CD8-positive, alpha-beta T cell (primary cell): ENCODE measurements at regions of chr2 and their contacts with region 1.

Region 1: DNA sequence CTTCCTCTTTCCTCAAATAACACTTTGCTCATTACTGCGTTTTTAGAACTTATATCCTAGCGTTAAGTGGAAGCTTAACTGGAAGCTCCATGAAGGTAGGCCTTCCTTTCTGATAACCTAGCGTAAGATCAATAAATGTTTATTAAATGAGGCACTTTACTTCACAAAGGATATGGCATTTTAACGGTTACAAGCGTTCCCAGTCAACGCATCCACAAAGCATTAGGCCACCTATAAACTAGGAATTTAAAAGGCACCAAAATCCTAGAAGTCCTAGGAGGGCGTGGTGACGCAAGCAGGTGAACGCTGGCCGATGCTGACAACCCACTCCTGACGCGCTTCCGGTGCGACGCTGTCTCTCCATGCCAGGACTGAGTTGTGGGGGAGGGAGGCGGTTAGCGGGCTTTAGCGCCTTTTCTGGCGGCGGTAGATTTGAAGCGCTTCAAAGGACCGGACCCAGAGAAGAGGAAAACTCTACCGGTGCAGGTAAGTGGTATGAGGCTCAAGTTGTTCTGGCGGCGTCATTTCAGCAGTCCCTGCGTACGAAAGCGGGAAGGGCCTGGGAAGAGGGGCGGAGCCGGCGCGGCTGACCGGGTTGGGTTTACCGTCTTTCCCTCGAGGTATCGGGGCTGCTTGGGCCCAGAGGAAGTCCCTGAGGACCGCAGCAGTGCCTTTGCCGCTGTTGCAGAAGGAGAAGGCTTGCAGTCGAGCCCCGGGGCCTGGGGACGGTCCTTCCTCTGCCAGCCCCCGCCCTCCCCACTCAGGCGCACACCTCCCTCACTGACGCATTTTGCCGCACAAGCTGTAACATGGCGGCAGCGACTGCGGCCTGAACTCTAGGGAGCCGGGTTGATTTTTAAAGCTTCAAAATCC is at the start of gene PPIG:
- DNase-seq: peak; percentile 74 to 97 (median 88)
- ATAC-seq: peak; percentile 91
- H3K4me3 ChIP-seq: peak within 1 kb of the TSS; percentile 85 to 100
- H3K4me3 Mint-ChIP-seq: peak within 1 kb of the TSS; percentile 97
- H3K27ac ChIP-seq: peak within 1 kb of the TSS; percentile 97 to 98
- H3K27ac Mint-ChIP-seq: peak within 1 kb of the TSS; percentile 100
- H3K4me1 ChIP-seq: peaks cover 25% of the 10 kb centered on the region
- H3K4me1 Mint-ChIP-seq: peaks cover 39% of the 10 kb centered on the region
- H3K27me3 ChIP-seq: no peaks in the 10 kb centered on the region
- H3K27me3 Mint-ChIP-seq: no peaks in the 10 kb centered on the region
- CTCF ChIP-seq: no peak
- total RNA-seq, gene PPIG: 89.8 to 104 TPM

Region 2: GRCh38 chr2:169406891-169407290 is 177.3 kb before region 1 on chr2:
- CTCF ChIA-PET with region 1: no interaction called
- POLR2A ChIA-PET with region 1: no interaction called
- intact Hi-C with region 1: no loop called
- DNase-seq: no peak
- ATAC-seq: no peak
- H3K4me3 ChIP-seq: no peak overlapping the region
- H3K4me3 Mint-ChIP-seq: no peak overlapping the region
- H3K27ac ChIP-seq: no peak overlapping the region
- H3K27ac Mint-ChIP-seq: no peak overlapping the region
- H3K4me1 ChIP-seq: no peaks in the 10 kb centered on the region
- H3K4me1 Mint-ChIP-seq: no peaks in the 10 kb centered on the region
- H3K27me3 ChIP-seq: no peaks in the 10 kb centered on the region
- H3K27me3 Mint-ChIP-seq: peaks cover 5% of the 10 kb centered on the region
- CTCF ChIP-seq: no peak

Region 3: GRCh38 chr2:169619946-169620345 is 35.7 kb after region 1 on chr2:
- CTCF ChIA-PET with region 1: no interaction called
- POLR2A ChIA-PET with region 1: no interaction called
- intact Hi-C with region 1: loop called in 1 of 2 experiments (anchors 5 kb)
- DNase-seq: no peak
- ATAC-seq: no peak
- H3K4me3 ChIP-seq: no peak overlapping the region
- H3K4me3 Mint-ChIP-seq: no peak overlapping the region
- H3K27ac ChIP-seq: no peak overlapping the region
- H3K27ac Mint-ChIP-seq: no peak overlapping the region
- H3K4me1 ChIP-seq: no peaks in the 10 kb centered on the region
- H3K4me1 Mint-ChIP-seq: peaks cover 42% of the 10 kb centered on the region
- H3K27me3 ChIP-seq: no peaks in the 10 kb centered on the region
- H3K27me3 Mint-ChIP-seq: no peaks in the 10 kb centered on the region
- CTCF ChIP-seq: no peak

Region 4: GRCh38 chr2:169798718-169799592 is 214.7 kb after region 1 on chr2 and contains the start of gene SSB:
- CTCF ChIA-PET with region 1: no interaction called
- POLR2A ChIA-PET with region 1: interaction called, 6 read pairs
- intact Hi-C with region 1: loop called (anchors 1 to 2 kb)
- DNase-seq: peak; percentile 83 to 97 (median 93)
- ATAC-seq: peak; percentile 92
- H3K4me3 ChIP-seq: peak within 1 kb of the TSS; percentile 55 to 80
- H3K4me3 Mint-ChIP-seq: peak within 1 kb of the TSS; percentile 80
- H3K27ac ChIP-seq: peak within 1 kb of the TSS; percentile 86 to 89
- H3K27ac Mint-ChIP-seq: peak within 1 kb of the TSS; percentile 87
- H3K4me1 ChIP-seq: peaks cover 20% of the 10 kb centered on the region
- H3K4me1 Mint-ChIP-seq: peaks cover 29% of the 10 kb centered on the region
- H3K27me3 ChIP-seq: no peaks in the 10 kb centered on the region
- H3K27me3 Mint-ChIP-seq: no peaks in the 10 kb centered on the region
- CTCF ChIP-seq: no peak
- total RNA-seq, gene SSB: 150 to 170 TPM